ENCODE measurements at regions of chr19 and their contacts with region 1.

Region 1: GRCh38 chr19:38315657-38316476 is at the start of gene YIF1B:
- DNase-seq: peak; percentile 97
- ATAC-seq: peak; percentile 95
- H3K4me3 Mint-ChIP-seq: peak within 1 kb of the TSS; percentile 94
- H3K27ac Mint-ChIP-seq: peak within 1 kb of the TSS; percentile 98
- H3K4me1 Mint-ChIP-seq: peaks cover 35% of the 10 kb centered on the region
- H3K27me3 Mint-ChIP-seq: no peaks in the 10 kb centered on the region
- total RNA-seq, gene YIF1B: 76.3 to 90.1 TPM

Region 2: GRCh38 chr19:37506387-37507166 is 809.3 kb before region 1 on chr19 and contains the start of gene ZNF793:
- CTCF ChIA-PET with region 1: no interaction called
- POLR2A ChIA-PET with region 1: no interaction called
- intact Hi-C with region 1: loop called in 1 of 2 experiments (anchors 5 kb)
- DNase-seq: peak; percentile 87
- ATAC-seq: peak; percentile 87
- H3K4me3 Mint-ChIP-seq: no peak within 1 kb of the TSS
- H3K27ac Mint-ChIP-seq: no peak within 1 kb of the TSS
- H3K4me1 Mint-ChIP-seq: no peaks in the 10 kb centered on the region
- H3K27me3 Mint-ChIP-seq: no peaks in the 10 kb centered on the region
- total RNA-seq, gene ZNF793: 4.4 to 4.7 TPM

Region 3: GRCh38 chr19:38229585-38230073 is 86.2 kb before region 1 on chr19:
- CTCF ChIA-PET with region 1: no interaction called
- POLR2A ChIA-PET with region 1: no interaction called
- intact Hi-C with region 1: loop called in 1 of 2 experiments (anchors 1 kb)
- DNase-seq: peak; percentile 87
- ATAC-seq: peak; percentile 96
- H3K4me3 Mint-ChIP-seq: no peak overlapping the region
- H3K27ac Mint-ChIP-seq: no peak overlapping the region
- H3K4me1 Mint-ChIP-seq: peaks cover 8% of the 10 kb centered on the region
- H3K27me3 Mint-ChIP-seq: peaks cover 39% of the 10 kb centered on the region

Region 4: GRCh38 chr19:38263689-38264485 is 52.0 kb before region 1 on chr19:
- CTCF ChIA-PET with region 1: interaction called, 4 read pairs
- POLR2A ChIA-PET with region 1: no interaction called
- intact Hi-C with region 1: loop called (anchors 1 to 5 kb)
- DNase-seq: peak; percentile 90
- ATAC-seq: peak; percentile 87
- H3K4me3 Mint-ChIP-seq: peak overlapping the region; percentile 83
- H3K27ac Mint-ChIP-seq: peak overlapping the region; percentile 94
- H3K4me1 Mint-ChIP-seq: peaks cover 34% of the 10 kb centered on the region
- H3K27me3 Mint-ChIP-seq: no peaks in the 10 kb centered on the region

Region 5: DNA sequence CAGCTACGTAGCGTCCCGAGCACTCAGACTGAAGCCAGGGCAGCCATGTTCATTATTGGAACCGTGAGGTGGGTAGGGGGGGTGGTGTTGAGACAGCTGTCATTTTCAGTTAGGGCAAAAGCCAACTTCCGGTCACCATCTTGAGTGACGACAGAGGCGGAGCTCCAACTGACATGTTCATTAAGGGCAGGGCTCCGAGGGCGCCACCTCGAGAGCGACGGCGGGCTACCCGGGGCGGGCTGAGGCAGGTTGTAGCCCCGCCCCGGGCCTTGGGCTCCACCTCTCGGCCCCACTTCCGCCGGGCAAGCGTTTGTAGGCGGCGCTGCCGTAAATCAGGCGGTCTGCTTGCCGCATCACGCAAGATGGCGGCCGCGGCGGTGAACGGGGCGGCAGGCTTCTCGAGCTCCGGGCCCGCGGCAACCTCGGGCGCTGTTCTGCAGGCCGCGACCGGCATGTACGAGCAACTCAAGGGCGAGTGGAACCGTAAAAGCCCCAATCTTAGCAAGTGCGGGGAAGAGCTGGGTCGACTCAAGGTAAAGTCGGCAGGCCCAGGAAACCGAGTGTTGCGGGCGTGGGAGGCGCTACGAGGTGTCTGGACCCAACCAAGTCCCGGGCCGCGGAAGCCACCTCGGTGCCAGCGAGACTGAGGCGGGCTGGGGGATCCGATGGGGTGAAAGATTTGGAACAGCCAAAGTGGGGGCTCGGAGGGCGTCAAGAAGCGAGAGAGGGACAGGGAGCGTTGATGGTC is 58.7 kb after region 1 on chr19 and contains the start of gene PSMD8:
- CTCF ChIA-PET with region 1: no interaction called
- POLR2A ChIA-PET with region 1: no interaction called
- intact Hi-C with region 1: loop called in 1 of 2 experiments (anchors 1 kb)
- DNase-seq: peak; percentile 99
- ATAC-seq: peak; percentile 99
- H3K4me3 Mint-ChIP-seq: peak within 1 kb of the TSS; percentile 97
- H3K27ac Mint-ChIP-seq: peak within 1 kb of the TSS; percentile 98
- H3K4me1 Mint-ChIP-seq: peaks cover 26% of the 10 kb centered on the region
- H3K27me3 Mint-ChIP-seq: peaks cover 5% of the 10 kb centered on the region
- total RNA-seq, gene PSMD8: 219 to 275 TPM

Region 6: DNA sequence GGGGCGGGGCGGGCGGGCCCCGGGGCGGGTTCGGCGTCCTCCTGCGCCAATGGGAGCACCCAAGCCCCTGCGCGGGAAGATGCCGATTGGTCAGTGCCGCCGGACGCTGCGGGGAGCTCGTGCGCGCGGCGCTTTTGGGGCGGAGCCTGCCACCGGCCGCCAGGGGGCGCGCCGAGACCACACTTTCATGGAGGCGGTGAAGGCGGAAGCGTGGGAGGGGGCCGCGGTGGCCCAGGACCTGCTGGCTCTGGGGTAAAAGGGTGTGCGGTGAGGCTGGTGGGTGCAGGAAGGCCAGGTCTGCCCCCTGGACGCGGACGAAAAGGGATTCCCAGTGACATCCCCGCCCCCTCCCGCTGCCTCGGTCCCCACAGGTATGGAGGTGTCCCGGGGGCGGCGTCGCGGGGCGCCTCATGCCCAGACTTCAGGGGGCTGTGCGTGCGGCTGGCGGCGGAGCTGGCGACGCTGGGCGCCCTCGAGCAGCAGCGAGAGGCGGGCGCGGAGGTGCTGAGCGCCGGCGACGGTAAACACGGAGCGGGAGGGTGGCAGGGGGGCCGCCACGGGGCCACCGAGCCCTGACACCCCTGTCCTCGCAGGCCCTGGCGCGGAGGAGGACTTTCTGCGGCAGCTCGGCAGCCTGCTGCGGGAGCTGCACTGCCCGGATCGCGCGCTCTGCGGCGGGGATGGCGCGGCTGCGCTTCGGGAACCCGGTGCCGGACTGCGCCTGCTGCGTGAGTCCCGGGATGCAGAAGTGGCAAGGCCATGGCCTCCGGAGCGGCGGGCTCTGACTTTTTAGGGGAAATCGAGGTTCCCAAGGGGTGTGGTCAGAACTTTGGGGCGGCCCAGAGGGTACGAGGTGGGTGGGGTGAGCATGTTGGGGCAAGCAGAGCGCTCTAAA is 87.3 kb after region 1 on chr19 and contains the start of gene FAM98C:
- CTCF ChIA-PET with region 1: interaction called, 3 read pairs
- POLR2A ChIA-PET with region 1: no interaction called
- intact Hi-C with region 1: loop called in 1 of 2 experiments (anchors 1 kb)
- DNase-seq: peak; percentile 99
- ATAC-seq: peak; percentile 99
- H3K4me3 Mint-ChIP-seq: peak within 1 kb of the TSS; percentile 84
- H3K27ac Mint-ChIP-seq: peak within 1 kb of the TSS; percentile 85
- H3K4me1 Mint-ChIP-seq: peaks cover 16% of the 10 kb centered on the region
- H3K27me3 Mint-ChIP-seq: no peaks in the 10 kb centered on the region
- total RNA-seq, gene FAM98C: 19.6 to 24.8 TPM

Region 7: GRCh38 chr19:38647368-38647965 is 331.6 kb after region 1 on chr19 and contains the start of gene ACTN4:
- CTCF ChIA-PET with region 1: no interaction called
- POLR2A ChIA-PET with region 1: no interaction called
- intact Hi-C with region 1: loop called in 1 of 2 experiments (anchors 1 kb)
- DNase-seq: peak; percentile 100
- ATAC-seq: peak; percentile 92
- H3K4me3 Mint-ChIP-seq: peak within 1 kb of the TSS; percentile 98
- H3K27ac Mint-ChIP-seq: peak within 1 kb of the TSS; percentile 81
- H3K4me1 Mint-ChIP-seq: peaks cover 39% of the 10 kb centered on the region
- H3K27me3 Mint-ChIP-seq: peaks cover 10% of the 10 kb centered on the region
- total RNA-seq, gene ACTN4: 181 to 182 TPM

Measured in activated CD4-positive, alpha-beta T cell treated with anti-CD3 and anti-CD28 coated beads for 36 hours (primary cell).